Sciatic nerve (tissue), 2 donors: ENCODE measurements at regions of chr7 and their contacts with region 1.

Region 1: DNA sequence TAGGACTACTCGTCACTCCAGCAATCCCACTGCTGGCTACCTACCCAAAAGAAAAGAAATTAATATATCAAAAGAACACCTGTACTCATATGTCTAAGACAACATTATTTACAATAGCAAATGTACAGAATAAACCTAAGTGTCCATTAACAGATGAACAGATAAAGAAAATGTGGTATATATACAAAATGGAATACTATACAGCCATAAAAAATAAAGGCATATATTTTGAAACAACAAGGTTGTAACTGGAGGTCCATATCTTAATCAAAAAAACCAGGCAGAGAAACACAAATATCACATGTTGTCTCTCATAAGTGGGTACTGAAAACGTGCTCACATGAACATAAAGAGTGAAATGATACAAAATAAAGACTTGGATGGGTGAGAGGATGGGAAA is 1073.3 kb upstream of the PHF14 start:
- DNase-seq: no peak
- ATAC-seq: no peak

Region 2: GRCh38 chr7:9921326-9921725 is 21.0 kb after region 1 on chr7:
- intact Hi-C with region 1: no loop called
- DNase-seq: no peak
- ATAC-seq: no peak

Region 3: GRCh38 chr7:10128748-10129147 is 228.4 kb after region 1 on chr7:
- intact Hi-C with region 1: loop called (anchors 5 kb)
- DNase-seq: no peak
- ATAC-seq: no peak